Caco-2 (cell line): ENCODE measurements at regions of chr1 and their contacts with region 1.

Region 1: GRCh38 chr1:218361298-218362065 is 16.3 kb downstream of the TGFB2 start:
- DNase-seq: peak in 1 of 2 experiments; percentile 48
- H3K4me3 ChIP-seq: no peak overlapping the region
- H3K4me3 Mint-ChIP-seq: no peak overlapping the region
- H3K27ac Mint-ChIP-seq: no peak overlapping the region
- H3K4me1 ChIP-seq: peaks cover 38% of the 10 kb centered on the region
- H3K4me1 Mint-ChIP-seq: no peaks in the 10 kb centered on the region
- H3K27me3 ChIP-seq: no peaks in the 10 kb centered on the region
- H3K27me3 Mint-ChIP-seq: no peaks in the 10 kb centered on the region
- CTCF ChIP-seq: peak; percentile 58 to 68

Region 2: GRCh38 chr1:218521375-218522169 is 160.1 kb after region 1 on chr1:
- CTCF ChIA-PET with region 1: no interaction called
- POLR2A ChIA-PET with region 1: no interaction called
- intact Hi-C with region 1: loop called (anchors 1 kb)
- DNase-seq: peak; percentile 33 to 55
- H3K4me3 ChIP-seq: no peak overlapping the region
- H3K4me3 Mint-ChIP-seq: no peak overlapping the region
- H3K27ac Mint-ChIP-seq: no peak overlapping the region
- H3K4me1 ChIP-seq: peaks cover 21% of the 10 kb centered on the region
- H3K4me1 Mint-ChIP-seq: peaks cover 9% of the 10 kb centered on the region
- H3K27me3 ChIP-seq: no peaks in the 10 kb centered on the region
- H3K27me3 Mint-ChIP-seq: no peaks in the 10 kb centered on the region
- CTCF ChIP-seq: peak; percentile 22 to 53

Region 3: GRCh38 chr1:218546309-218546708 is 184.8 kb after region 1 on chr1:
- CTCF ChIA-PET with region 1: interaction called, 3 read pairs
- POLR2A ChIA-PET with region 1: no interaction called
- intact Hi-C with region 1: loop called (anchors 1 kb)
- DNase-seq: peak in 1 of 2 experiments; percentile 36
- H3K4me3 ChIP-seq: no peak overlapping the region
- H3K4me3 Mint-ChIP-seq: no peak overlapping the region
- H3K27ac Mint-ChIP-seq: no peak overlapping the region
- H3K4me1 ChIP-seq: no peaks in the 10 kb centered on the region
- H3K4me1 Mint-ChIP-seq: no peaks in the 10 kb centered on the region
- H3K27me3 ChIP-seq: no peaks in the 10 kb centered on the region
- H3K27me3 Mint-ChIP-seq: no peaks in the 10 kb centered on the region
- CTCF ChIP-seq: peak in 1 of 2 experiments; percentile 33

Region 4: DNA sequence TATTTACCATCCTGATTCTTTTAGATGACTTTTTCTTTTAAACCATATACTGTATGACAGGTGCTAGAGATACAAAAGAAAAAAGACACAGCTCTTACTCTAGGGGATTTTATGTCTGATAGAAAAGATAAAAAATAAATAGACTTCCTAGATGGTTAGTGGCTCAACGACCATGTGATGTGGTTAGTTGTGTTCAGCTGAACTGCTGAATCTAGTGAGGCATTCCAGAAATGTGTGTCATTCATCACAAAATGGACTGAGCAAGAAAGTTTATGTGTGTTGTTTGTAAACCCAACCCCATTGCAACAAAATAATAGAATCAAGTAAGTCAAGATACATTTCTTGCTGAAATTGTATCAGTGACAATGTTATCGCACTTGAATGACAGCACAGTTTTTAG is 606.4 kb after region 1 on chr1:
- CTCF ChIA-PET with region 1: no interaction called
- POLR2A ChIA-PET with region 1: no interaction called
- intact Hi-C with region 1: no loop called
- DNase-seq: no peak
- H3K4me3 ChIP-seq: no peak overlapping the region
- H3K4me3 Mint-ChIP-seq: no peak overlapping the region
- H3K27ac Mint-ChIP-seq: no peak overlapping the region
- H3K4me1 ChIP-seq: no peaks in the 10 kb centered on the region
- H3K4me1 Mint-ChIP-seq: no peaks in the 10 kb centered on the region
- H3K27me3 ChIP-seq: no peaks in the 10 kb centered on the region
- H3K27me3 Mint-ChIP-seq: no peaks in the 10 kb centered on the region
- CTCF ChIP-seq: no peak

Region 5: GRCh38 chr1:218983887-218984286 is 622.4 kb after region 1 on chr1:
- CTCF ChIA-PET with region 1: no interaction called
- POLR2A ChIA-PET with region 1: no interaction called
- intact Hi-C with region 1: loop called (anchors 2 kb)
- DNase-seq: peak in 1 of 2 experiments; percentile 44
- H3K4me3 ChIP-seq: no peak overlapping the region
- H3K4me3 Mint-ChIP-seq: no peak overlapping the region
- H3K27ac Mint-ChIP-seq: no peak overlapping the region
- H3K4me1 ChIP-seq: no peaks in the 10 kb centered on the region
- H3K4me1 Mint-ChIP-seq: no peaks in the 10 kb centered on the region
- H3K27me3 ChIP-seq: no peaks in the 10 kb centered on the region
- H3K27me3 Mint-ChIP-seq: no peaks in the 10 kb centered on the region
- CTCF ChIP-seq: peak; percentile 44 to 49

Region 6: GRCh38 chr1:219317762-219318353 is 956.4 kb after region 1 on chr1:
- CTCF ChIA-PET with region 1: no interaction called
- POLR2A ChIA-PET with region 1: no interaction called
- intact Hi-C with region 1: loop called (anchors 10 kb)
- DNase-seq: peak; percentile 16 to 39
- H3K4me3 ChIP-seq: no peak overlapping the region
- H3K4me3 Mint-ChIP-seq: no peak overlapping the region
- H3K27ac Mint-ChIP-seq: no peak overlapping the region
- H3K4me1 ChIP-seq: peaks cover 4% of the 10 kb centered on the region; the same call in 1 of the 2 replicates
- H3K4me1 Mint-ChIP-seq: no peaks in the 10 kb centered on the region
- H3K27me3 ChIP-seq: no peaks in the 10 kb centered on the region
- H3K27me3 Mint-ChIP-seq: no peaks in the 10 kb centered on the region
- CTCF ChIP-seq: peak in 1 of 2 experiments; percentile 59